ENCODE measurements at regions of chr2 and their contacts with region 1.

Region 1: DNA sequence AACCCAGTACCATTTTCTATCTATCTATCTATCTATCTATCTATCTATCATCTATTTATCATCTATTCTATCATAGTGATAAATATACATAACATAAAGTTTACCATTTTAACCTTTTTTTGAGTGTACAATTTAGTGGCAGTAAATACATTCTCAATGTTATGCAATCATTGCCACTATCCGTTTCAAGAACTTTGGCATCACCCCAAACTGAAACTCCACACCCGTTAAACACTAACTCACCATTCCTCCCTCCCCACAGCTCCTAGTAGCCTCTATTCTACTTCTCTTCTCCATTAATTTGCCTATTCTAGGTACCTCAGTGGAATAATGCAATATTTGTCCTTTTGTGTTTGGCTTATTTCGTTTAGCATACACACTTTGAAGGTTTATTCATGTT is 82.5 kb upstream of the KCNE4 start:
- DNase-seq: no peak
- ATAC-seq: no peak
- H3K4me3 ChIP-seq: no peak overlapping the region
- H3K27ac ChIP-seq: no peak overlapping the region
- H3K4me1 ChIP-seq: no peaks in the 10 kb centered on the region
- H3K27me3 ChIP-seq: no peaks in the 10 kb centered on the region
- CTCF ChIP-seq: no peak
- EP300 ChIP-seq: no peak
- POLR2A ChIP-seq: no peak
- RAD21 ChIP-seq: no peak

Region 2: DNA sequence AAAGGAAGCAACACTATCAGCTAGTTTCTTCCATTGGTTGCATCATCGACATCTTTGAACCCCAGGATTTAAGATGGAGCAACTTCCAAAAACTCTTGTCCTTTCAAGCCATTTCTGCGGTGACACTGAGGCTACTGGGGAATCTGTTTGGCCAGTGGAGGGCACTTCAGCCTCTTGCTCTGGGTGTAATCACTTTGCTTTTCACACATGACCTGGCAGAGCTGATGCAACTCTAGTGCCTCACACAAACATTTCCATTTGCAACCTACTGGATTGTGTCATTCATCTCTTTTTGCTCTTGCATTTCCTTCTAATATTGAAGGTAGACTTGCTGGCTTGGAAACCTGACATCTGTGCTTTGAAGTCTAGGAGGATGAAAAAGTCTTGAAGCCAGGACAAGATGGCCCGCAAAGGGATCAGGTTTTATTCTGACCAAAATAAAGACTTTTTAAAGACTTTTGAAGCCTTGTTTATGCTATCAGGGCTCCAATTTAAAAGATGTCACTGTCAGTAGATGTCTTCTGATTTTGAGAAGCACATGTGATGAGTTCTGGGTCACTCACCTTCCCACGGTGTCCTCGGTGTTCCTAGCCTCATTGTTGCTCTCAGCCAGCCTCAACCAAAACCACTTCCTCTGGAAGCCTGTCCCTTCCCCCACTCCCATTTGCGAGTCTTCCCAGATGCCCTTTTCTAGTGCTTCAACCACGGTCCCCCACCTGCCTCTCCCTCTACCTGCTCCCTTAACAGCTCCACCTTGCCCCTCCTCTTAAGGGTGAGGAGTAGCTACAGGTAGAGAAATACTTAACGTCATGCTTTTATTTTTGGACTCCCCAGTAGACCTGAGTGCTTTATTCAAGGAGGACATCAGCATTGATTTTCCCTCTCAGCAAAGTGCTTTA is 12.8 kb after region 1 on chr2:
- CTCF ChIA-PET with region 1: interaction called, 13 read pairs
- POLR2A ChIA-PET with region 1: no interaction called
- RAD21 ChIA-PET with region 1: no interaction called
- SMC1A ChIA-PET with region 1: interaction called, 8 read pairs
- in situ Hi-C with region 1: no loop called
- intact Hi-C with region 1: no loop called
- DNase-seq: no peak
- ATAC-seq: peak; percentile 79
- H3K4me3 ChIP-seq: no peak overlapping the region
- H3K27ac ChIP-seq: no peak overlapping the region
- H3K4me1 ChIP-seq: no peaks in the 10 kb centered on the region
- H3K27me3 ChIP-seq: no peaks in the 10 kb centered on the region
- CTCF ChIP-seq: peak; percentile 11 to 36 (median 31); a peak in 4 of 6 replicates
- EP300 ChIP-seq: no peak
- POLR2A ChIP-seq: no peak
- RAD21 ChIP-seq: 0 out of 2 replicates have a peak, but pooled peaks have one; percentile 14

Region 3: DNA sequence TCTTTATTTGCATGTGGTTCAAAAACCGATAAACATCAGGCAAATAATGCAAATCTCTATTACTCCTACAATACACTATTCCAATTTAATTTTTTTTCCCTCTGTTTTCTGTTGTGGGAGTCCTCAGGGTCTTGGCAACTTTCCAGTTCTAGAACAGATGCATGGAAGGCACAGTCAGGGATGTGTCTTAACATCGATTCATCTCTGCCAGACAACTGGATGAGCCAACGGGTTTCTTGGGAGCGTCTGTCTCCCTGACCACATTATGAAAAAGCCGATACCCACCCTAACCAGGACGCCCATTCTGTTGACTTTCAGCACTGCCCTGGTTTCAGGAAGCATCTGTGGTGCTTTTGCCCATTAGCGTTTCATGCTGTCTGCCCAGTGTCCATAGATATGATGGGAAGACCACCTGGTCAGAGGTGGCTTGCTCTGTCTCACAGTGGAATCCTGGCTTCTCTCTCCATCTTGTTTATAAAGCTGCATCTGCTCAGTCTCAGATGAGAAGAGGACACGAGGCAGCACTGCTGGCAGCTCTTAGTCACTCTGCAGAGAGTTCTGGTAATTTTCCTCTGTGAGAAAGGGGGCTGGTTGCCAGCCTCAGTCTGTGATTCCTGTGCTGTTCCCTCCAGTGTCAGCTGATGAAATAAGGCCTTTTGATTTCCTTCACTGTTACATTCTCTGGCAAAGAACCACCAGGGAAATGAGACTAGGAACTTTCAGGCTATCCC is 24.6 kb after region 1 on chr2:
- CTCF ChIA-PET with region 1: no interaction called
- POLR2A ChIA-PET with region 1: no interaction called
- RAD21 ChIA-PET with region 1: no interaction called
- SMC1A ChIA-PET with region 1: no interaction called
- in situ Hi-C with region 1: no loop called
- intact Hi-C with region 1: no loop called
- DNase-seq: no peak
- ATAC-seq: no peak
- H3K4me3 ChIP-seq: no peak overlapping the region
- H3K27ac ChIP-seq: no peak overlapping the region
- H3K4me1 ChIP-seq: no peaks in the 10 kb centered on the region
- H3K27me3 ChIP-seq: no peaks in the 10 kb centered on the region
- CTCF ChIP-seq: no peak
- EP300 ChIP-seq: no peak
- POLR2A ChIP-seq: no peak
- RAD21 ChIP-seq: no peak

Region 4: GRCh38 chr2:223101340-223102039 is 132.0 kb after region 1 on chr2:
- CTCF ChIA-PET with region 1: interaction called, 14 read pairs
- POLR2A ChIA-PET with region 1: no interaction called
- RAD21 ChIA-PET with region 1: interaction called, 8 read pairs
- SMC1A ChIA-PET with region 1: no interaction called
- in situ Hi-C with region 1: no loop called
- intact Hi-C with region 1: loop called (anchors 1 kb)
- DNase-seq: peak; percentile 31
- ATAC-seq: peak; percentile 83
- H3K4me3 ChIP-seq: no peak overlapping the region
- H3K27ac ChIP-seq: no peak overlapping the region
- H3K4me1 ChIP-seq: peaks cover 5% of the 10 kb centered on the region; the same call in 1 of the 2 replicates
- H3K27me3 ChIP-seq: no peaks in the 10 kb centered on the region; a peak in 1 of 4 replicates
- CTCF ChIP-seq: peak; percentile 26 to 34 (median 28); a peak in 4 of 6 replicates
- EP300 ChIP-seq: no peak
- POLR2A ChIP-seq: no peak
- RAD21 ChIP-seq: 0 out of 2 replicates have a peak, but pooled peaks have one; percentile 20

Region 5: GRCh38 chr2:223306371-223306770 is 336.9 kb after region 1 on chr2:
- CTCF ChIA-PET with region 1: interaction called, 3 read pairs
- POLR2A ChIA-PET with region 1: no interaction called
- RAD21 ChIA-PET with region 1: interaction called, 8 read pairs
- SMC1A ChIA-PET with region 1: interaction called, 3 read pairs
- in situ Hi-C with region 1: no loop called
- intact Hi-C with region 1: loop called (anchors 2 kb)
- DNase-seq: no peak
- ATAC-seq: peak; percentile 79
- H3K4me3 ChIP-seq: no peak overlapping the region
- H3K27ac ChIP-seq: no peak overlapping the region
- H3K4me1 ChIP-seq: no peaks in the 10 kb centered on the region
- H3K27me3 ChIP-seq: no peaks in the 10 kb centered on the region
- CTCF ChIP-seq: peak; percentile 43 to 54 (median 51); a peak in 4 of 6 replicates
- EP300 ChIP-seq: no peak
- POLR2A ChIP-seq: no peak
- RAD21 ChIP-seq: peak; percentile 47